Activated CD4-positive, alpha-beta T cell treated with anti-CD3 and anti-CD28 coated beads for 36 hours (primary cell): ENCODE measurements at regions of chr15 and their contacts with region 1.

Region 1: GRCh38 chr15:74842581-74843444 is at the start of gene ULK3:
- DNase-seq: peak; percentile 97
- ATAC-seq: peak; percentile 85
- H3K4me3 Mint-ChIP-seq: peak within 1 kb of the TSS; percentile 90
- H3K27ac Mint-ChIP-seq: peak within 1 kb of the TSS; percentile 90
- H3K4me1 Mint-ChIP-seq: peaks cover 45% of the 10 kb centered on the region
- H3K27me3 Mint-ChIP-seq: no peaks in the 10 kb centered on the region
- total RNA-seq, gene ULK3: 40.3 to 45.2 TPM

Region 2: GRCh38 chr15:74635228-74635627 is 207.6 kb before region 1 on chr15:
- CTCF ChIA-PET with region 1: interaction called, 4 read pairs
- POLR2A ChIA-PET with region 1: no interaction called
- intact Hi-C with region 1: loop called in 1 of 2 experiments (anchors 5 kb)
- DNase-seq: peak; percentile 87
- ATAC-seq: peak; percentile 90
- H3K4me3 Mint-ChIP-seq: no peak overlapping the region
- H3K27ac Mint-ChIP-seq: no peak overlapping the region
- H3K4me1 Mint-ChIP-seq: no peaks in the 10 kb centered on the region
- H3K27me3 Mint-ChIP-seq: no peaks in the 10 kb centered on the region

Region 3: GRCh38 chr15:74712311-74712710 is 130.5 kb before region 1 on chr15:
- CTCF ChIA-PET with region 1: no interaction called
- POLR2A ChIA-PET with region 1: no interaction called
- intact Hi-C with region 1: no loop called
- DNase-seq: no peak
- ATAC-seq: no peak
- H3K4me3 Mint-ChIP-seq: no peak overlapping the region
- H3K27ac Mint-ChIP-seq: no peak overlapping the region
- H3K4me1 Mint-ChIP-seq: no peaks in the 10 kb centered on the region
- H3K27me3 Mint-ChIP-seq: peaks cover 2% of the 10 kb centered on the region

Region 4: GRCh38 chr15:74723754-74724334 is 119.0 kb before region 1 on chr15:
- CTCF ChIA-PET with region 1: no interaction called
- POLR2A ChIA-PET with region 1: no interaction called
- intact Hi-C with region 1: loop called in 1 of 2 experiments (anchors 1 kb)
- DNase-seq: no peak
- ATAC-seq: peak; percentile 51
- H3K4me3 Mint-ChIP-seq: no peak overlapping the region
- H3K27ac Mint-ChIP-seq: no peak overlapping the region
- H3K4me1 Mint-ChIP-seq: peaks cover 13% of the 10 kb centered on the region
- H3K27me3 Mint-ChIP-seq: peaks cover 9% of the 10 kb centered on the region

Region 5: DNA sequence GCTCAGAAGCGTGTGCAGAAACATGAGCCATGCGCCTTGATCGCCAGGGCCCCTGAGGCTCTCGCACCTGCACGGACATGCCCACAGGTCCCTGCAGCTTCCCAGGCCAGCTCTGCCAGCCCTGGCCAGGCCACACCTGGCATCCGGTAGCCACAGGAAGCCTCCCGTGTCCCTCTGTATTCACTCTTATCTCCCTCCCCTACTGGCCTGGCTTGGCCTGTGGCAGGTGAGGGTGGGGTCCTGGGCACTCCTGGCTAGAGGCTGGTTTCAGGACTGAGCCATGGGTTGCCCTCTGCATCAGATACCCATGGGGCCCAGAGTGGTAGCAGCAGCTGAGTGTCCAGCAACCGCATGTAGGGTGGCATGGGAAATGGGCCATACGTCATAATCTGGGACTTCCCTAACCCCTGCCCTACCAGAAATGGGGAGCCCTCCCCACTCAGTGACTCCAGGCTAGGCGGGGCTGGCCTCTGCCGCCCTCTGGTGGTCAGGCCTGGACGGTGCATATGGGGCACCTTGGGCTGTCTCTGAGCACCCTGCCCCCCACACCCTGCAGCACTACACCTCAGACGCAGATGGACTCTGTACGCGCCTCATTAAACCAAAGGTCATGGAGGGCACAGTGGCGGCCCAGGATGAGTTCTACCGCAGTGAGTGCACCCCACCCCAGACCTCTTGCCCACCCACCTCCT is 42.8 kb before region 1 on chr15:
- CTCF ChIA-PET with region 1: interaction called, 5 read pairs
- POLR2A ChIA-PET with region 1: no interaction called
- intact Hi-C with region 1: loop called in 1 of 2 experiments (anchors 5 kb)
- DNase-seq: peak; percentile 93
- ATAC-seq: peak; percentile 87
- H3K4me3 Mint-ChIP-seq: no peak overlapping the region
- H3K27ac Mint-ChIP-seq: peak overlapping the region; percentile 80
- H3K4me1 Mint-ChIP-seq: peaks cover 44% of the 10 kb centered on the region
- H3K27me3 Mint-ChIP-seq: no peaks in the 10 kb centered on the region

Region 6: GRCh38 chr15:74889883-74890664 is 47.3 kb after region 1 on chr15 and contains the start of gene MPI:
- CTCF ChIA-PET with region 1: interaction called, 3 read pairs
- POLR2A ChIA-PET with region 1: interaction called, 6 read pairs
- intact Hi-C with region 1: loop called (anchors 1 kb)
- DNase-seq: peak; percentile 95
- ATAC-seq: peak; percentile 98
- H3K4me3 Mint-ChIP-seq: peak within 1 kb of the TSS; percentile 73
- H3K27ac Mint-ChIP-seq: peak within 1 kb of the TSS; percentile 86
- H3K4me1 Mint-ChIP-seq: peaks cover 46% of the 10 kb centered on the region
- H3K27me3 Mint-ChIP-seq: no peaks in the 10 kb centered on the region
- total RNA-seq, gene MPI: 75.7 to 93.3 TPM